GM10248 (cell line): ENCODE measurements at regions of chr14 and their contacts with region 1.

Region 1: DNA sequence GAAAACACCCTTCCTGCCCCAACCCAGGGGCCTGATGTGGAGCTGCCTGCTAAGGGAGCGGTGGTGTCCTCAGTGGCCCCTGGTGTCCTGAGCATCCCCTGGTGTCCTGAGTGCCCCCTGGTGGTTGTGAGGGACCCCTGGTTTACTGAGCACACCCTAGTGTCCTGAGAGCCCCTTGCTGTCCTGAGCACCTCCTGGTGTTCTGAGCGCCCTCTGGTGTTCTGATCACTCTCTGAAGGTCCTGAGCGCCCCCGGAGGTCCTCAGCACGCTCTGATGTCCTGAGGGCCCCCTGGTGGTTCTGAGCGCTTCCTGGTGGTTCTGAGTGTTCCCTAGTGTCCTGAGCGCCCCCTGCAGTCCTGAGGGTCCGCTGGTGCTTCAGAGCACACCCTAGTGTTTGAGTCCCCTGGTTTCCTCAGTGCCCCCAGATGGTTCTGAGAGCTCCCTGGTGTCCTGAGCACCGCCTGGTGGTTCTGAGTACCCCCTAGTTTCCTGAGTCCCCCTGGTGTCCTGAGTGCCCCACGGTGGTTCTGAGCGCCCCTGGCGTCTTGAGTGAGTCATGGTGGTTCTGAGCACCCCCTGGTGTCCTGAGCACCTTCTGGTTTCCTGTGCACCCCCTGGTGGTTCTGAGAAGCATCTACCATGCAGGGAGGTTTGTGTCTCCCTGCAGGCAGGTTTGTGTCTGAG is 1004.2 kb downstream of the TMEM121 start:
- DNase-seq: peak; percentile 25
- CTCF ChIP-seq: peak; percentile 81

Region 2: GRCh38 chr14:106277503-106277902 is 253.1 kb before region 1 on chr14:
- CTCF ChIA-PET with region 1: no interaction called
- POLR2A ChIA-PET with region 1: no interaction called
- DNase-seq: peak; percentile 24
- CTCF ChIP-seq: peak; percentile 59

Region 3: DNA sequence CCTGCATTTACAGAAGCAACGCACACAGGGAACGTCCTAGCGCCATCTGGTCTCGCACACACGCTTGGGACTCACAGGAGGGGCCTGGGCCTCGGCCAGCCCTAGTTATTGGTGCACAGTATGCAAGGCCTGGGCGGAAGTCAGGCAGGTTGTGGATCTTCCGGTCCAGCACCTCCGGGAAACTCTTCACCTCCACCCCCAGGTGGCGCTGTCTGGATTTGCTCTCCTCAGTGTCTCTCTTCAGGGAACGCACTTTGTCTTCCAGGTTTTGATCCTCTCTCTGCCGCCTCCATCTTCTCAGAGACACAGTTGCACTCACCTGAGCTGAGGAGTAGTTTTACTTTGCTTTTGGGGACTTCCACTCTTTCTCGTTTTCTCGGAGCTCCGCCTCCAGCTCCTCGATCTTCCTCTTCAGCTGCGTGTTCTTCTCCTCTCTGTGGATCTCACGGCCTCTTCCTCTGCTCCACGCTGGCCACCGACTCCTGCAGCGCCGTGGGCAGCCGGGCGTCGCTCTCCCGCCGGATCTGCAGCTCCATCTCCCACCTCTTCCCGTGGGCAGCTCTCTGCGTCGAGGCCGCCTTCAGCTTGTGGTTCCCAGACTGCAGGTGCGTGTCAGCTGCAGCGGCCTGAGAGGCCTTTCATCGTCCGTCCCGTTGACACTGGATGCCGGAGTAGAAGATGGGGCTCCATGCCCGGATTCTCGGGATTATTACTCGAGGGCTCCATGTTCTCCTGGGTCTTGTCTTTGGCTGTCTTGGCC is 70.4 kb before region 1 on chr14:
- CTCF ChIA-PET with region 1: interaction called, 70 read pairs
- POLR2A ChIA-PET with region 1: no interaction called
- DNase-seq: peak; percentile 38
- CTCF ChIP-seq: peak; percentile 9

Region 4: GRCh38 chr14:106511006-106511799 is 19.4 kb before region 1 on chr14:
- CTCF ChIA-PET with region 1: interaction called, 126 read pairs
- POLR2A ChIA-PET with region 1: no interaction called
- DNase-seq: no peak
- CTCF ChIP-seq: no peak

Region 5: DNA sequence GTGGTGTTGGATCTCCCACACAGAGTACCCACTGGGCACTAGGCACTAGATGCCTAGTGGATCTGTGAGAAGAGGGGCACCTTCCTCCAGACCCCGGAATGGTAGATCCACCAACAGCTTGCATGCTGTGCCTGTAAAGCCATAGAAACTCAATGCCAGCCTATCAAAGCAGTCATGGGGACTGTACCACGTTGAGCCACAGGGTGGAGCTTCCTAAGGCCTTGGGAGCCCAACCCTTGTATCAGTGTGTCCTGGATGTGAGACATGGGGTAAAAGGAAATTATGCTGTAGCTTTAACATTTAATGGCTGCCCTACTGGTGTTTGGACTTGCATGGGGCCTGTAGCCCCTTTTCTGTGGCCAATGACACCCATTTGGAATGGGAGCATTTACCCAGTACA is 20.7 kb after region 1 on chr14:
- CTCF ChIA-PET with region 1: interaction called, 235 read pairs
- POLR2A ChIA-PET with region 1: no interaction called
- DNase-seq: no peak
- CTCF ChIP-seq: peak; percentile 3

Region 6: DNA sequence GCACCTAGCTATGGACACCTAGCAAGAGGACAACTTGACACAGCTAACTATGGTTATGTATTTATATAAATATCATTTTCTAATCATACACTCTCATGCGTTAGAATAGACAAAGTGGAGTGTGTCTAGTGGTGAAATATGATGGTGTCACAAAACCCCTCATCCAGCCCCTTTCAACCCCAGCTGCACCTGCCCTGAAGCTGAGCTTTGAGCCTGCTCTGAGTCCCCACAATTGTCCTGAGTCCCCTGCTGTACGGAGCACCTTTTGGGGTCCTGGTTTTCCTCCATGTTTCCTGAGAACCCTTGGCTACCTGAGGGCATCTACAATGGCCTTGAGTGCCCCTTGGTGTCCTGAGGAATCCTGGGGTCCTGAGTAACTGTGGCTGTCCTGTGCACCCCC is 68.6 kb after region 1 on chr14:
- CTCF ChIA-PET with region 1: interaction called, 18 read pairs
- POLR2A ChIA-PET with region 1: no interaction called
- DNase-seq: no peak
- CTCF ChIP-seq: no peak

Region 7: GRCh38 chr14:106622200-106622745 is 91.7 kb after region 1 on chr14:
- CTCF ChIA-PET with region 1: interaction called, 11 read pairs
- POLR2A ChIA-PET with region 1: no interaction called
- DNase-seq: no peak
- CTCF ChIP-seq: no peak

Region 8: DNA sequence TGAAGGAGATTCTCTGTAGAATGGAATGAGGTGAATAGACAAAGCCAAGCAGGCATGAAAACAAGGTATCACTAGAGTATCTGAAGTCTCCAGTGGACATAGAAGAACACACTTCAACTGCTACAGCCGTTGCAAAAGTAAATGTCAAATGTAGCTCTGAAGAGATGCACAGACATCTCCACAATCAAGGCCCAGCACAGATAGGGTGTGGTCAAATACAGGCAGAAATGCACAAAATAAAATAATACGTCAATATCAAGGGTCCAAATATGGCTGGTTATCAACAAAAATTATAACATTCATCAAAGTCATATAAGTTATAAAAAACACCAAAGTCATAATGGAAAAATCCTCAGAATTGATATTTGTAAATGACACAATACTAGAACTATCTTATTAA is 103.2 kb after region 1 on chr14:
- CTCF ChIA-PET with region 1: no interaction called
- POLR2A ChIA-PET with region 1: no interaction called
- DNase-seq: no peak
- CTCF ChIP-seq: no peak